ENCODE measurements at regions of chr19 and their contacts with region 1.

Region 1: GRCh38 chr19:36489118-36489919 is at the start of gene ZNF566:
- H3K4me3 ChIP-seq: peak within 1 kb of the TSS; percentile 58
- H3K27ac ChIP-seq: peak within 1 kb of the TSS; percentile 95
- H3K4me1 ChIP-seq: 0 out of 2 replicates have a peak, but pooled peaks cover 2% of the 10 kb centered on the region
- CTCF ChIP-seq: peak; percentile 66

Region 2: GRCh38 chr19:36132489-36132891 is 356.8 kb before region 1 on chr19:
- CTCF ChIA-PET with region 1: interaction called, 3 read pairs
- POLR2A ChIA-PET with region 1: interaction called, 11 read pairs
- H3K4me3 ChIP-seq: no peak overlapping the region
- H3K27ac ChIP-seq: no peak overlapping the region
- H3K4me1 ChIP-seq: peaks cover 12% of the 10 kb centered on the region
- CTCF ChIP-seq: no peak

Region 3: GRCh38 chr19:36378625-36379509 is 110.5 kb before region 1 on chr19 and contains the start of gene ZFP14:
- CTCF ChIA-PET with region 1: no interaction called
- POLR2A ChIA-PET with region 1: interaction called, 29 read pairs
- H3K4me3 ChIP-seq: peak within 1 kb of the TSS; percentile 63
- H3K27ac ChIP-seq: peak within 1 kb of the TSS; percentile 86
- H3K4me1 ChIP-seq: peaks cover 10% of the 10 kb centered on the region
- CTCF ChIP-seq: peak; percentile 85

Region 4: GRCh38 chr19:36418287-36419001 is 70.9 kb before region 1 on chr19 and contains the start of gene ZFP82:
- CTCF ChIA-PET with region 1: interaction called, 3 read pairs
- POLR2A ChIA-PET with region 1: interaction called, 13 read pairs
- H3K4me3 ChIP-seq: peak within 1 kb of the TSS; percentile 46
- H3K27ac ChIP-seq: peak within 1 kb of the TSS; percentile 87
- H3K4me1 ChIP-seq: peaks cover 9% of the 10 kb centered on the region
- CTCF ChIP-seq: peak; percentile 76

Region 5: GRCh38 chr19:36573020-36573885 is 83.9 kb after region 1 on chr19 and contains the start of gene ZNF529:
- CTCF ChIA-PET with region 1: no interaction called
- POLR2A ChIA-PET with region 1: interaction called, 25 read pairs
- H3K4me3 ChIP-seq: peak within 1 kb of the TSS; percentile 70
- H3K27ac ChIP-seq: peak within 1 kb of the TSS; percentile 86
- H3K4me1 ChIP-seq: peaks cover 18% of the 10 kb centered on the region
- CTCF ChIP-seq: peak; percentile 89

Measured in HEK293 (cell line).